Posterior cingulate gyrus (tissue), 11 donors: ENCODE measurements at regions of chr16 and their contacts with region 1.

Region 1: DNA sequence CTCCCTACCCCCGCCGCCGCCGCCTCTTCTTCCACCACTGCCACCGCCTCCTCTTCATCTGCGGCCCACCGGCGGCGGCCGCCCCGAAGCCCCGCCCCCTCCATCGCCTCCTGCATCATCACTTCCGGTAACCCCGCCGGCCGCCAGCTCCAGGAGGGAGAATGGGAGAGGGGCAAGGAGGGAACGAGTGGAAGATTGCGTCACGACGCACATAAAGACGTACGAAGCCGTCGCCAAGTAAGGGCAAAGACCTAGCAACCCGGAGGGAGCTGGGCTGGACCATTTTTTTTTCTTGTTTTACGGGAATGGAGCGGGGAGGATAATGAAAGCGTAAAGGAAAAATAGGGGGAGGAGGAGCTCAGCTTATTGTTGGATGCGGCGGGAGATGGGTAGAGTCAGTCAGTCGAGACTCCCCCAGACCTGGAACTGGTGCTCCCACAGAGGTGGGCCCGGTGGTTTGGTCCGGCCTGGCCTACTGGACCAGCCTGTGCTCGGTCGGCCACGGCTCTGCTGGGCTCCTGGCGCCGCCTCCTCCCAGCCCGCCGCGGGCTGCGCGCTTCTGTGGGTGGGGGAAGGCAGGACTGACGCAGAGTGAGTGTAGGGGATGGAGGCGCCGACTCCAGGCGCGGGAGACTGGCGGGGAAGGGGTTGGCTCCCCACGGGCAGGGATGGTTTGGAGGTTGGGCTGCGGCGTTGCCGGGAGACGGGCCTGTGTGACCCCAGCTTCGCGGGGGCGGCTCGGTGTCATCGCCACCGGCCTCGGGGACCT is at the starts of genes DCUN1D3 and LYRM1:
- DNase-seq: peak; percentile 91 to 99 (median 94)

Region 2: GRCh38 chr16:20806168-20807050 is 94.1 kb before region 1 on chr16 and contains the starts of genes ERI2 and REXO5:
- intact Hi-C with region 1: loop called (anchors 5 kb)
- DNase-seq: peak; percentile 85 to 98 (median 92)

Region 3: DNA sequence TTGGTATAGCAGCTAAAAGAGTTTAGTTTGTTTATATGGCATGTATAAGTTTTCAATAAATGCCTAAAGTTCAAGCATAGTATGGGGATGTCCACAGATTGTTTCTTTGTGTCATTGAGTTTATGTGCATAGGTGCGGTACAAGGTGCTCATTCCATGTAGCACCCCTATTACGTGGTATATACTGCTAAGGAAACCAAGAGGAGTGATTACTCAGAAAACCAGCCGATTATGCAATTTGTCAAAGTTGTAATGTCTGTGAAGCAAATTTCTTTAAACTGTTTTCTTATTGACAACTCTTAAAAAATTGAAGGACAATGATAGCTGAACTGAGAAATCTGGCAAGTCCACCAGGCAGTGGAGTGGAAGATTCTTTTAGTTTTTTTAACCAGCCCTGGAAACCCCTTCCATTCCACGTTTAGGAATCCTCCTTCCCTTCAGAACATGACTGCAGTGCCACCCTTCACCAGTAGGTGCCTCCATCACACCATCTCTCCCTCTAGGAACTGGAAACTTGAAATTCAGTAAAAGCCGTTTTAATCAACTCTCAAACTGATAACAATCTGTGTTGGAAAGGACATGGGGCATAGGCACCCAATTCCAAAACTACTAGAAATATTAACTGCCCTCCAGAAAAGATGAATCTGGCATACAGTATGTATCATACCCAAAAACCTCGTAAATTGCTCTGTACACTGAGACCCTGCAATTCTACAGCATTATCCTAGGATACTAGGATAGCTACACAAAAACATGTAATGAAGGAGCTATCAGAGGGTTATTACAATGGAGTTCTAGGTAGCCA is 50.7 kb before region 1 on chr16:
- intact Hi-C with region 1: loop called (anchors 5 kb)
- DNase-seq: peak; percentile 43 to 93 (median 80)

Region 4: GRCh38 chr16:20928774-20929411 is 28.4 kb after region 1 on chr16:
- intact Hi-C with region 1: no loop called
- DNase-seq: no peak